HepG2 (cell line): ENCODE measurements at regions of chrX and their contacts with region 1.

Region 1: GRCh38 chrX:153400146-153401127 is 713 bp downstream of the PNMA6E start:
- DNase-seq: peak; percentile 29
- ATAC-seq: peak; percentile 88
- H3K4me3 ChIP-seq: no peak overlapping the region
- H3K27ac ChIP-seq: no peak overlapping the region
- H3K4me1 ChIP-seq: no peaks in the 10 kb centered on the region
- H3K27me3 ChIP-seq: no peaks in the 10 kb centered on the region; a peak in 1 of 5 replicates
- CTCF ChIP-seq: peak; percentile 92
- EP300 ChIP-seq: no peak
- POLR2A ChIP-seq: no peak
- RAD21 ChIP-seq: peak; percentile 82

Region 2: DNA sequence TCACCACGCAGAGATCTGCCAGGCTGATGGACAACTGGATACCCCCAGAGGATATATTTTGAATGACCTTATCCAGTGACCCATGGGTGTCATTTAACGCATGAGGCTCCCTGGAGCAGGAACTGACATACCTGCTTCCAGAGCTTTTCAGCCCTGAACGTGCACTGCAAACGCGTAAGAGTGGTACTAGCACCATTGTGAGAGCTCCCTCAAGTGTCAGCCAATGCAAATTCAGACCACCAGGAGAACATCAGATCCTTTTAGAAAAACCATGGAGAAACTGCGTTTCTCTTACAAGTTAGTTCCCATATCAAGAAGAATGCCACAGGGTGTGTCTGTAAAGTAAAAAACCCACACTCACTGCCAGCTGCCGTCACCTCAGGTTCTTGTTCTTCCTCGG is 38.1 kb after region 1 on chrX:
- CTCF ChIA-PET with region 1: interaction called, 10 read pairs
- POLR2A ChIA-PET with region 1: no interaction called
- in situ Hi-C with region 1: no loop called
- intact Hi-C with region 1: no loop called
- DNase-seq: peak; percentile 20
- ATAC-seq: peak; percentile 75
- H3K4me3 ChIP-seq: no peak overlapping the region
- H3K27ac ChIP-seq: no peak overlapping the region
- H3K4me1 ChIP-seq: no peaks in the 10 kb centered on the region
- H3K27me3 ChIP-seq: no peaks in the 10 kb centered on the region; a peak in 1 of 5 replicates
- CTCF ChIP-seq: peak; percentile 72
- EP300 ChIP-seq: no peak
- POLR2A ChIP-seq: no peak
- RAD21 ChIP-seq: no peak

Region 3: GRCh38 chrX:153703036-153703370 is 302.6 kb after region 1 on chrX:
- CTCF ChIA-PET with region 1: no interaction called
- POLR2A ChIA-PET with region 1: no interaction called
- in situ Hi-C with region 1: no loop called
- intact Hi-C with region 1: no loop called
- DNase-seq: no peak
- ATAC-seq: no peak
- H3K4me3 ChIP-seq: no peak overlapping the region
- H3K27ac ChIP-seq: no peak overlapping the region
- H3K4me1 ChIP-seq: peaks cover 14% of the 10 kb centered on the region
- H3K27me3 ChIP-seq: no peaks in the 10 kb centered on the region
- CTCF ChIP-seq: no peak
- EP300 ChIP-seq: no peak
- POLR2A ChIP-seq: no peak
- RAD21 ChIP-seq: no peak